H1 (cell line): ENCODE measurements at regions of chr19 and their contacts with region 1.

Region 1: DNA sequence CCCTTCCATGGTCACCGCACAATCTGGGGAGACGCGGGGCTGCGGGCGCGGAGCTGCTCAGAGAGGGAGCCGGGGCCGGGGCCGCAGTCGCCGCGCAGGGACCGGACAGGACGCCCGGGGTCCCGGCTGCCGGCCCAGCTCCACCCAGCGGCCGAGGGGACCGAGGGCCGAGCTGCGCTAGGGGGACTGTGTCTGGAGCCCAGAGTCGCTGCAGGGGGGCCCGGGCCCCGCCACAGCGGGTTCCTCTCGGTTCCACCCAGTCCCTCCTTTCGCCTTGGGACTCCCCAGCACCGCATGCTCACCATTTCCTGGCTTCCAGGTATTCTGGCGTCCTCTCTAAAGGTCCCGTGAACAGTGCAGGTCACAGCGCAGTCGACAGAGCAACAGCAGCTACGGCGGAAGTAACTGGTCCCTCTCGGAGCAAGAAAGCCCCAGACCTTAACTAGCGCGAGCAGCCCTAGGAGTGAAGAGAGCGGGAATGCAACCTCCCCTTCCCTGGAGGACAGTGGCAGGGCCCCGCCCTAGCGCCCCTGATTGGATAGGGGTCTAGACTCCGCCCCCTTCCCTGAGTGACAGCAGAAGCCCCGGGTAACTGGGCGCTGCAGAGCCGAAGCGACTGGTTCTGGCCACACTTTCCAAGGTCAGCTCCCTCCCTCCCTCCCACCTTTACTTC is at the start of gene ZNF878:
- DNase-seq: peak; percentile 95 to 97
- H3K4me3 ChIP-seq: peak within 1 kb of the TSS; percentile 42 to 92 (median 86)
- H3K27ac ChIP-seq: peak within 1 kb of the TSS; percentile 84; the same call in 1 of the 2 replicates
- H3K4me1 ChIP-seq: peaks cover 0 to 6% (median 4%) of the 10 kb centered on the region in 4 experiments; a peak in 3 of 7 replicates
- H3K27me3 ChIP-seq: no peaks in the 10 kb centered on the region
- CTCF ChIP-seq: peak in 2 of 3 experiments; percentile 13 to 14; a peak in 2 of 4 replicates
- EP300 ChIP-seq: no peak; a peak in 1 of 3 replicates
- POLR2A ChIP-seq: peak; percentile 96 to 100
- RAD21 ChIP-seq: no peak; a peak in 1 of 4 replicates
- total RNA-seq, gene ZNF878: 9.1 and 9.5 TPM in 2 replicates

Region 2: GRCh38 chr19:11887611-11888531 is 164.8 kb before region 1 on chr19 and contains the start of gene ZNF69:
- CTCF ChIA-PET with region 1: no interaction called
- POLR2A ChIA-PET with region 1: interaction called, 11 read pairs
- DNase-seq: peak; percentile 75 to 89
- H3K4me3 ChIP-seq: peak within 1 kb of the TSS; percentile 79 to 85 (median 84)
- H3K27ac ChIP-seq: peak within 1 kb of the TSS; percentile 81
- H3K4me1 ChIP-seq: peaks cover 4 to 15% (median 6%) of the 10 kb centered on the region in 4 experiments
- H3K27me3 ChIP-seq: no peaks in the 10 kb centered on the region
- CTCF ChIP-seq: peak in 1 of 3 experiments; percentile 6; a peak in 1 of 4 replicates
- EP300 ChIP-seq: no peak
- POLR2A ChIP-seq: peak; percentile 65 to 86
- RAD21 ChIP-seq: no peak
- total RNA-seq, gene ZNF69: 21.2 and 22.8 TPM in 2 replicates

Region 3: GRCh38 chr19:11924886-11925650 is 127.6 kb before region 1 on chr19 and contains the start of gene ZNF700:
- CTCF ChIA-PET with region 1: interaction called, 8 read pairs
- POLR2A ChIA-PET with region 1: interaction called, 13 read pairs
- DNase-seq: peak; percentile 56 to 95
- H3K4me3 ChIP-seq: peak within 1 kb of the TSS; percentile 65 to 82 (median 76)
- H3K27ac ChIP-seq: peak within 1 kb of the TSS; percentile 95
- H3K4me1 ChIP-seq: peaks cover 0 to 3% (median 3%) of the 10 kb centered on the region in 4 experiments; a peak in 4 of 7 replicates
- H3K27me3 ChIP-seq: 0 out of 7 replicates have a peak, but pooled peaks cover 0 to 3% (median 0%) of the 10 kb centered on the region in 4 experiments
- CTCF ChIP-seq: no peak
- EP300 ChIP-seq: 0 out of 3 replicates have a peak, but pooled peaks of 1 of the 2 experiments have one; percentile 17
- POLR2A ChIP-seq: peak; percentile 91 to 98
- RAD21 ChIP-seq: no peak
- total RNA-seq, gene ZNF700: 9.4 and 10.5 TPM in 2 replicates

Region 4: DNA sequence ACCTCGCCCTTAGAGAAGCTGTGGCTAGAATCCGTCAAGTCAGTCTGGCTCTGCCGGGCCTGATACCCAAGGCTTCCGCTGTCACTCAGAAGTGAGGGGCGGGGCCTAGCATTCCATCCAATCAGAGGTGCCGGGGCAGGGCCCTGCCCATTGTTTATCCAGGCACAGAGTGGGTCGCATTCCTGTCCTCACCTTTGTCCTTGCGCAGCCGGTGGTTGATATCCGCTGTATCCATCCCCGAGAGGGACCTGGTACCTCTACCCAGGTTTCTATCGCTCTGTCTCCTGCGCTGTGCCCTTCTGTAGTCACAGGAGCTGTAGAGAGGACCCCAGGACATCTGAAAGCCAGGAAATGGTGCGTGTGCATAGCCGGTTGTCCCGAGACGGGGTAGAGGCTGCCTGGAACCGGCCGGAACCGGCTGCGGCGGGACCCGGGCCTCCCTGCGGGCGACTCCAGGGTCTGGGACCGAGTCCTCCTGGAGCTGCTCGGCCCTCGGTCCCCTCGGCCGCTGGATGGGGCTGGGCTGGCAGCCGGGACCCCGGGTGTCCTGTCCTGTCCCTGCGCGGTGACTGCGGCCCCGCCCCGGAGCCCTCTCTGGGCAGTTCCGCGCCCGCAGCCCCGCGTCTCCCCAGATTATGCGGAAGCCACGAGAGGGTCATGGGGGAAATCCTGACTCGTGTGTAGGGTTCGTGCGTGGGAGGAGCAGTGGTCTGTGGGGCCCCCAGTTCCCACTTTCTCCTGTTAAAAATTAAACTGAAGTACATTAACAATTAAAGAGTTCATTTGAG is 87.6 kb before region 1 on chr19 and contains the start of gene ZNF763:
- CTCF ChIA-PET with region 1: interaction called, 11 read pairs
- POLR2A ChIA-PET with region 1: interaction called, 14 read pairs
- DNase-seq: peak; percentile 89 to 96
- H3K4me3 ChIP-seq: peak within 1 kb of the TSS; percentile 66 to 76 (median 72)
- H3K27ac ChIP-seq: peak within 1 kb of the TSS; percentile 75; the same call in 1 of the 2 replicates
- H3K4me1 ChIP-seq: peaks cover 0 to 7% (median 4%) of the 10 kb centered on the region in 4 experiments; a peak in 5 of 7 replicates
- H3K27me3 ChIP-seq: peaks cover 0 to 13% (median 7%) of the 10 kb centered on the region in 4 experiments; a peak in 5 of 7 replicates
- CTCF ChIP-seq: no peak
- EP300 ChIP-seq: no peak
- POLR2A ChIP-seq: peak; percentile 71 to 91
- RAD21 ChIP-seq: no peak; a peak in 2 of 4 replicates
- total RNA-seq, gene ZNF763: 1.7 TPM in 2 replicates

Region 5: DNA sequence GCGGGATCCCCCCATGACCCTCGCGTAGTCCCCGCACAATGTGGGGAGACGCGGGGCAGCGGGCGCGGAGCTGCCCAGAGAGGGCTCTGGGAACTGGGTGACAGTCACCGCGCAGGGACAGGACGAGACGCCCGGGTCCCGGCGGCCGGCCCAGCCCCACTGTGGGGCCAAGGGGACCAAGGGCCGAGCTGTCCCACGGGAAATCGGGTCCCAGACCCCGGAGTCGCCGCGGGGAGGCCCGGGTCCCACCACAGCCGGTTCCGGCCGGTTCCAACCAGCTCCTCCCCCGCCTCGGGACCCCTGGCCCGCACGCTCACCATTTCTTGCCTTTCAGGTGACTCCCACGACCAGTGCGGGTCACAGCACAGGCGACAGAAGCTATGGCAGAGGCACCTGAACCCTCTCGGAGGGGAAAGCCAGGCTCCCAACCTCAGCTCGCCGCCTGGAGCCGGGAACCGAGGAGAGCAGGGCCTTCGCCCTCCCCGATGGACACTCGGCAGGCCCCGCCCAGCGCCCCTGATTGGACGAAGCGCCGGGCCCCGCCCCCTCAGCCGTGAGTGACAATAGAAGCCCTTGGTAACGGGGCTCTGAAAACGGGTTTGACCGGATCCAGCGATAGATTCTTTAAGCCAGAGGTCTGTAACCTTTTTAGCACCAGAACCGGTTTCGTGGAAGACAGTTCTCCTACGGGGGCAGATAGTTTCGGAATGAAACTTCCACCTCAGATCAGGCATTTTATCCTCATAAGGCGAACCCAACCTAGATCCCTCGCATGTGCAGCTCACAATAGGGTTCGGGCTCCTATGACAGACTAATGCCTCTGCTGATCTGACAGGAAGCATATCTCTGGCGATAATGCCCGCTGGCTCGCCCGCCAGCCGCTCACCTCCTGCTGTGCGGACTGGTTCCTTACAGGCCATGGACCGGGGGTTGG is 17.1 kb before region 1 on chr19 and contains the start of gene ZNF433:
- CTCF ChIA-PET with region 1: interaction called, 3 read pairs
- POLR2A ChIA-PET with region 1: interaction called, 58 read pairs
- DNase-seq: peak; percentile 76 to 99
- H3K4me3 ChIP-seq: peak within 1 kb of the TSS; percentile 58 to 81 (median 80)
- H3K27ac ChIP-seq: peak within 1 kb of the TSS; percentile 76; the same call in 1 of the 2 replicates
- H3K4me1 ChIP-seq: peaks cover 0 to 4% (median 2%) of the 10 kb centered on the region in 4 experiments; a peak in 3 of 7 replicates
- H3K27me3 ChIP-seq: peaks cover 0 to 7% (median 2%) of the 10 kb centered on the region in 4 experiments; a peak in 3 of 7 replicates
- CTCF ChIP-seq: peak in 1 of 3 experiments; percentile 11; a peak in 1 of 4 replicates
- EP300 ChIP-seq: peak in 1 of 2 experiments; percentile 69; a peak in 1 of 3 replicates
- POLR2A ChIP-seq: peak in 1 of 2 experiments; percentile 80; a peak in 2 of 3 replicates
- RAD21 ChIP-seq: no peak
- total RNA-seq, gene ZNF433: 1.4 and 1.8 TPM in 2 replicates

Region 6: GRCh38 chr19:12064590-12065538 is 12.2 kb after region 1 on chr19 and contains the start of gene ZNF844:
- CTCF ChIA-PET with region 1: interaction called, 8 read pairs
- POLR2A ChIA-PET with region 1: interaction called, 72 read pairs
- DNase-seq: peak; percentile 75 to 99
- H3K4me3 ChIP-seq: peak within 1 kb of the TSS; percentile 62 to 82 (median 73)
- H3K27ac ChIP-seq: peak within 1 kb of the TSS; percentile 94
- H3K4me1 ChIP-seq: peaks cover 2 to 8% (median 4%) of the 10 kb centered on the region in 4 experiments; a peak in 6 of 7 replicates
- H3K27me3 ChIP-seq: no peaks in the 10 kb centered on the region
- CTCF ChIP-seq: no peak
- EP300 ChIP-seq: peak; percentile 15 to 31; a peak in 2 of 3 replicates
- POLR2A ChIP-seq: peak; percentile 87 to 99
- RAD21 ChIP-seq: no peak
- total RNA-seq, gene ZNF844: 9.4 and 9.8 TPM in 2 replicates

Region 7: GRCh38 chr19:12077375-12077774 is 24.7 kb after region 1 on chr19:
- CTCF ChIA-PET with region 1: no interaction called
- POLR2A ChIA-PET with region 1: no interaction called
- DNase-seq: no peak
- H3K4me3 ChIP-seq: no peak overlapping the region; a peak in 1 of 8 replicates
- H3K27ac ChIP-seq: no peak overlapping the region
- H3K4me1 ChIP-seq: no peaks in the 10 kb centered on the region
- H3K27me3 ChIP-seq: no peaks in the 10 kb centered on the region
- CTCF ChIP-seq: no peak
- EP300 ChIP-seq: no peak
- POLR2A ChIP-seq: no peak
- RAD21 ChIP-seq: no peak

Region 8: DNA sequence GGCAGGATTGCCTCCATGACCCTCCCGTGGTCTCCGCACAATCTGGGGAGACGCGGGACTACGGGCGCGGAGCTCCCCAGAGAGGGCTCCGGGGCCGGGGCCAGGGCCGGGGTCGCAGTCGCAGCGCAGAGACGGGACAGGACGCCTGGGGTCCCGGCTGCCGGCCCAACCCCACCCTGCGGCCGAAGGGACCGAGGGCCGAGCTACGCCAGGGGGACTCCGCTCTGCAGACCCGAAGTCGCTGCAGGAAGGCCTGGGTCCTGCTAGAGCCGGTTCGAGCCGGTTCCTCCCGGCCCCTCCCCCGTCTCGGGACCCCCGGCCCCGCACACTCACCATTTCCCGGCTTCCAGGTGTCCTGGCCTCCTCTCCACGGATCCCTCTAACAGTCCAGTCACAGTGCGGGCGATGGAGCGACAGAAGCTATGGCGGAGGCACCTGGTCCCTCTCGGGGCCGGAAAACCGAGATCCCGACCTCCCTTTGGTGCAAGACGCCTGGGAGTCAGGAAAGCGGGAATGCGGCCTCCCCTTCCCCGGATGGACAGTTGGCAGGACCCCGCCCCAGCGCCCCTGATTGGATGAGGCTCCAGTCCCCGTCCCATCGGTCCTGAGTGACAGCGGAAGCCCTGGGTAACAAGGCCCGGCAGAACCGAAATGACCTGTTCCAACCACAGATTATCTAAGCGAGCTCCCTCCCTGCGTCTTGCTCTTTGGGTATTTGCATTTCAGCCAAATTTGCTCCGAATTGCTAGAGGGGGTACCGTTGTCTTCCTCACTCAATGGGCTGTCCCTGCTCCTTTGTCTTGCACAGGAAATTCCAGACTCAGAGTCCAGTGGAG is 103.8 kb after region 1 on chr19 and contains the start of gene ZNF625:
- CTCF ChIA-PET with region 1: interaction called, 3 read pairs
- POLR2A ChIA-PET with region 1: interaction called, 21 read pairs
- DNase-seq: peak; percentile 85 to 95
- H3K4me3 ChIP-seq: peak within 1 kb of the TSS; percentile 77 to 93 (median 82)
- H3K27ac ChIP-seq: peak within 1 kb of the TSS; percentile 93
- H3K4me1 ChIP-seq: peaks cover 0 to 3% (median 2%) of the 10 kb centered on the region in 4 experiments; a peak in 3 of 7 replicates
- H3K27me3 ChIP-seq: no peaks in the 10 kb centered on the region
- CTCF ChIP-seq: no peak
- EP300 ChIP-seq: no peak
- POLR2A ChIP-seq: peak; percentile 93 to 98
- RAD21 ChIP-seq: no peak
- total RNA-seq, gene ZNF625: 23.3 and 26.8 TPM in 2 replicates